ENCODE measurements at regions of chr4 and their contacts with region 1.

Region 1: GRCh38 chr4:102826890-102827673 is at the start of gene UBE2D3:
- DNase-seq: peak; percentile 79 to 96 (median 91)

Region 2: DNA sequence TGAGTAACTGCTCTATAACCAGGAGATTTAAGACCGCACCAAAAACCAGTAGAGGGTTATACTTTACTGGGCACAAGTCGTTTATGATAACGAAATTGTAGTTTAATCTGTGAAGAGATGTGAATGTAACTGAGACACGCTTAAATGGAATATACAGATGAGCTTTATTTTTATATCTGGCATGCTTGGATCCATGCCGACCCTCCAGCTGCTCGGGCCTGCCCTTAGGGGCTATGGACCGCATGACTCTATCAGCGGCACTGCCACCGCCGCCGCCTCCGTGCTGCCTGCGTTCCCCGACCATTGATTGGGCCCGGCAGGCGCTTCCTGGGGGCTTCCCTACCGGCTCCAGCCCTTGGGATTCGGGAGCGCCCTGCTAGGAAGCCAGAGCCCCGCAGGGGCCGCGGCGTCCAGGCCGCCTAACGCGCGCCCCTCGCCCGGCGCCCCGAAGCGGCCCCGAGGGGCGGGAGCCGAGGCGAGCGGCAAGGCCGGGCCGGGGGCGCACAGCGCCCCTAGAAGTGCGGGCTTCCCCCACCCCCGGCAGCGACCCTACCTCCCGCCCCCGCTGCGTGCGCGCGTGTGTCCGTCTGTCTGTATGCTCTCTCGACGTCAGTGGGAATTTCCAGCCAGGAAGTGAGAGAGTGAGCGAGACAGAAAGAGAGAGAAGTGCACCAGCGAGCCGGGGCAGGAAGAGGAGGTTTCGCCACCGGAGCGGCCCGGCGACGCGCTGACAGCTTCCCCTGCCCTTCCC is 326.2 kb before region 1 on chr4 and contains the start of gene NFKB1:
- intact Hi-C with region 1: loop called (anchors 5 kb)
- DNase-seq: peak; percentile 26 to 82 (median 64)

Region 3: GRCh38 chr4:102760645-102761295 is 66.3 kb before region 1 on chr4 and contains the start of gene MANBA:
- intact Hi-C with region 1: loop called (anchors 2 kb)
- DNase-seq: peak; percentile 61 to 94 (median 86)

Region 4: DNA sequence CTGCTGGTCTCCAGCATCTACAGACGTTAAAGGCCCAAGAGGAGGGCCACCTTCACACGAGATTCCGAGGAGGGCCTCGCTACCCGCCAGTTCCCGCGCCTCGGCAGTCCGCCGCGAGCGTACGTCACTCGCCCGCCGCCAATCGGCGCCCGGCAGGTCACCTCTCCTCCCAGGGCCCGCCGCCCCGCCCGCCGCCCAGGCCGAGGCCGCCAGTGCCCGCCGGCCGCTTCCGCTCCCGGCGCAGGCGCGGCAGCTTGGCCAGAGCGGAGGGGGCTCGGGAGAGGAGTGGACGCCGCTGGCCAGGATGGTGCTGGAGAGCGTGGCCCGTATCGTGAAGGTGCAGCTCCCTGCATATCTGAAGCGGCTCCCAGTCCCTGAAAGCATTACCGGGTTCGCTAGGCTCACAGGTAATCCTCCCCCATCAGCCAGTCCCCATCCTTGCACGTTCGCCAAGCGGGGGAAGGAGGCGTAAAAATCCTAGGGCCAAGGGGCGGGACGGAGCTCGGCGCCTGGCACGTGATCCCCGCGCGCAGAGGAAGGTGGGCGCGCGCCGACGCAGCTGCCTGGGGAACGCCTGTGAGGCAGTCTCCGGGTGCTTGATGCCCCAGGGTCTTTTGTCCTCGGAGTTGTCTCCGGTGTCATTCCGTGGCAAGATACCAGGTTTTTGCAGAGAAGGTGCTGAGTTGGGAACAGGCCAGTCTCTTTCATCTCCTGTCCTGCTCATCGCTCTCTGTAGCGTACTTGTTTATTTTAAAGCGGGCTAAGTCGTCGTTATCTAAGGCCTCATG is 41.9 kb after region 1 on chr4 and contains the start of gene CISD2:
- intact Hi-C with region 1: loop called (anchors 2 kb)
- DNase-seq: peak; percentile 79 to 97 (median 94)

Measured in head of caudate nucleus (tissue), 42 donors.